ENCODE measurements at regions of chr5 and their contacts with region 1.

Region 1: DNA sequence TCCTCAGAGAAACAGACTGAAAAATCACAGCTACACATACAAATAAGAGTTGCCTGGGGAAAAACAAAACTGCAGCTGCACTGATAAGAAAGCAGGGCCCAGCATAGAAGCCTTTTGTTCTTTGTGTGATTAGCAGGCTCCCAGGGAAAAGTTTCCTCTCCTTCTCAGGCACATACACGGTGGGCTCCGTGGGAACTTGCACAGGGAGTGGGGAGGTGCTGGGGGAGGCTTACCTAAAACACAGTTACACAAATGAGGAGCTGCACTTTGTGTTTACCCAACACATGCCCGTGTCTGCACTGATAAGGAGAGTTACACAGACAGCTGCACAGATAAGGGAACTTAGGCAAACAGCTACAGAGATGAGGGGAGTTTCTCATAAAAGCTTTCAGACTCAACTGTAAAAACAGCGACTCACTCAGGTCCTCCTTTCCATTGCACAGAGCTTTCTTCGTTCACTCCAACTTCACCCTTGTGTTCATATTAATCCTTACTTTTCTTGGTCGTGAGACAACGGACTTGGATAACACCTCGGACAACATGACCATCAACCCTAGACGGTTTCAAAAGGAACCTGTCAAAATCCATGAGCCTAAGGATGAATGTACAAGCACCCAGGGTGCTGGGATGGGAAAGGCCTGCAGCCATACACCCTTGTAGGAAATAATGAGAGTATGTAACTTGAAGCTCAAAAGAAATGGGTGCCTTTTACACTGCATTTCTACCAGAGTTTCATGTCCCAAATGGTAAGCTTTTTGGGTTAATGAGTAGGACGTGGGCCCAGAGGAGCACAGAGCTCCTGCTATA is 50.8 kb downstream of the SERINC5 start:
- DNase-seq: peak; percentile 95
- ATAC-seq: peak; percentile 95
- H3K4me3 ChIP-seq: peak overlapping the region; percentile 5 to 39 (median 19); a peak in 2 of 6 replicates
- H3K27ac ChIP-seq: peak overlapping the region; percentile 58
- H3K4me1 ChIP-seq: peaks cover 66% of the 10 kb centered on the region
- H3K27me3 ChIP-seq: no peaks in the 10 kb centered on the region
- CTCF ChIP-seq: peak; percentile 64
- EP300 ChIP-seq: peak in 1 of 2 experiments; percentile 91; a peak in 3 of 4 replicates
- POLR2A ChIP-seq: no peak
- RAD21 ChIP-seq: peak; percentile 46; the same call in 1 of the 2 replicates

Region 2: DNA sequence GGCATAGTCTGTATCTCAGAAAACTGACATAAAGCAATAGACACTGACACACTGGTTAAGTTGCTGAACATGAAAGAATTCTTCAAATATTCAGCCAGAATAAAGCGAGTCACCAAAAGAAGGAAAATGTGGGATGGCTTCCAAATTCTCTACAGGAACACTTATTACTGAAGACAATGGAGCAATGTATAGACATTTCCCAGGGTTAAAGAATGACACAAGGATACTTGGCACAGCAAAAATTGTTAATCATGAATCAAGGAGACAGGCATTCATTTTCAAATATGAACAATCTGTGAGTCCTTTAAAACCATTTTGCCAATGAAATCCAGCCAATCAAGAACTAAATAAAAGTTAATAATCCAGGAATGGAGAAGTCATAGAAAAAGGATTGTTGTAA is 306.4 kb before region 1 on chr5:
- CTCF ChIA-PET with region 1: no interaction called
- POLR2A ChIA-PET with region 1: no interaction called
- in situ Hi-C with region 1: no loop called
- intact Hi-C with region 1: no loop called
- DNase-seq: no peak
- ATAC-seq: no peak
- H3K4me3 ChIP-seq: no peak overlapping the region
- H3K27ac ChIP-seq: no peak overlapping the region
- H3K4me1 ChIP-seq: no peaks in the 10 kb centered on the region
- H3K27me3 ChIP-seq: 0 out of 5 replicates have a peak, but pooled peaks cover 0 to 4% of the 10 kb centered on the region in 2 experiments
- CTCF ChIP-seq: no peak
- EP300 ChIP-seq: no peak
- POLR2A ChIP-seq: no peak
- RAD21 ChIP-seq: no peak

Region 3: GRCh38 chr5:80125962-80126480 is 79.0 kb before region 1 on chr5:
- CTCF ChIA-PET with region 1: no interaction called
- POLR2A ChIA-PET with region 1: no interaction called
- in situ Hi-C with region 1: no loop called
- intact Hi-C with region 1: no loop called
- DNase-seq: no peak
- ATAC-seq: no peak
- H3K4me3 ChIP-seq: no peak overlapping the region
- H3K27ac ChIP-seq: no peak overlapping the region
- H3K4me1 ChIP-seq: peaks cover 17% of the 10 kb centered on the region
- H3K27me3 ChIP-seq: no peaks in the 10 kb centered on the region
- CTCF ChIP-seq: no peak
- EP300 ChIP-seq: no peak
- POLR2A ChIP-seq: no peak
- RAD21 ChIP-seq: no peak

Region 4: GRCh38 chr5:80153586-80154126 is 51.4 kb before region 1 on chr5:
- CTCF ChIA-PET with region 1: no interaction called
- POLR2A ChIA-PET with region 1: interaction called, 3 read pairs
- in situ Hi-C with region 1: no loop called
- intact Hi-C with region 1: loop called (anchors 2 kb)
- DNase-seq: peak; percentile 82
- ATAC-seq: peak; percentile 79
- H3K4me3 ChIP-seq: no peak overlapping the region
- H3K27ac ChIP-seq: peak overlapping the region; percentile 32
- H3K4me1 ChIP-seq: peaks cover 51% of the 10 kb centered on the region
- H3K27me3 ChIP-seq: no peaks in the 10 kb centered on the region
- CTCF ChIP-seq: no peak
- EP300 ChIP-seq: 0 out of 4 replicates have a peak, but pooled peaks of 1 of the 2 experiments have one; percentile 16
- POLR2A ChIP-seq: no peak
- RAD21 ChIP-seq: no peak

Region 5: GRCh38 chr5:80191991-80192398 is 13.0 kb before region 1 on chr5:
- CTCF ChIA-PET with region 1: no interaction called
- POLR2A ChIA-PET with region 1: interaction called, 12 read pairs
- in situ Hi-C with region 1: no loop called
- intact Hi-C with region 1: no loop called
- DNase-seq: no peak
- ATAC-seq: no peak
- H3K4me3 ChIP-seq: no peak overlapping the region
- H3K27ac ChIP-seq: no peak overlapping the region
- H3K4me1 ChIP-seq: peaks cover 57% of the 10 kb centered on the region
- H3K27me3 ChIP-seq: no peaks in the 10 kb centered on the region
- CTCF ChIP-seq: no peak
- EP300 ChIP-seq: no peak
- POLR2A ChIP-seq: no peak
- RAD21 ChIP-seq: no peak

Region 6: GRCh38 chr5:80231243-80231642 is 26.2 kb after region 1 on chr5:
- CTCF ChIA-PET with region 1: no interaction called
- POLR2A ChIA-PET with region 1: interaction called, 13 read pairs
- in situ Hi-C with region 1: no loop called
- intact Hi-C with region 1: no loop called
- DNase-seq: no peak
- ATAC-seq: no peak
- H3K4me3 ChIP-seq: no peak overlapping the region
- H3K27ac ChIP-seq: peak overlapping the region; percentile 88
- H3K4me1 ChIP-seq: peaks cover 53% of the 10 kb centered on the region
- H3K27me3 ChIP-seq: no peaks in the 10 kb centered on the region
- CTCF ChIP-seq: no peak
- EP300 ChIP-seq: no peak
- POLR2A ChIP-seq: no peak
- RAD21 ChIP-seq: no peak

Region 7: GRCh38 chr5:80255732-80256479 is 50.9 kb after region 1 on chr5 and contains the start of gene SERINC5:
- CTCF ChIA-PET with region 1: no interaction called
- POLR2A ChIA-PET with region 1: interaction called, 52 read pairs
- in situ Hi-C with region 1: no loop called
- intact Hi-C with region 1: no loop called
- DNase-seq: peak; percentile 53
- ATAC-seq: peak; percentile 77
- H3K4me3 ChIP-seq: peak within 1 kb of the TSS; percentile 80 to 97 (median 90)
- H3K27ac ChIP-seq: peak within 1 kb of the TSS; percentile 90
- H3K4me1 ChIP-seq: peaks cover 61% of the 10 kb centered on the region
- H3K27me3 ChIP-seq: no peaks in the 10 kb centered on the region; a peak in 1 of 5 replicates
- CTCF ChIP-seq: no peak
- EP300 ChIP-seq: 0 out of 4 replicates have a peak, but pooled peaks of 1 of the 2 experiments have one; percentile 8
- POLR2A ChIP-seq: peak; percentile 84 to 91
- RAD21 ChIP-seq: peak; percentile 12; the same call in 1 of the 2 replicates
- total RNA-seq, gene SERINC5: 22.8 and 23.1 TPM in 2 replicates

Measured in HepG2 (cell line).